ENCODE measurements at regions of chr1 and their contacts with region 1.

Region 1: GRCh38 chr1:152047730-152048402 is 11.1 kb upstream of the S100A11 start:
- DNase-seq: peak; percentile 99 to 100 (median 99)
- H3K4me3 ChIP-seq: peak overlapping the region; percentile 2 to 61 (median 26)
- H3K4me3 Mint-ChIP-seq: peak overlapping the region; percentile 74 to 91
- H3K27ac ChIP-seq: peak overlapping the region; percentile 98
- H3K27ac Mint-ChIP-seq: peak overlapping the region; percentile 100
- H3K4me1 ChIP-seq: peaks cover 69 to 78% of the 10 kb centered on the region in 2 donors
- H3K4me1 Mint-ChIP-seq: peaks cover 72% of the 10 kb centered on the region
- H3K27me3 ChIP-seq: peaks cover 0 to 2% of the 10 kb centered on the region in 2 donors
- H3K27me3 Mint-ChIP-seq: peaks cover under 1 to 3% (median 3%) of the 10 kb centered on the region in 3 donors
- CTCF ChIP-seq: peak; percentile 46

Region 2: GRCh38 chr1:151945725-151946364 is 102.0 kb before region 1 on chr1:
- intact Hi-C with region 1: loop called in 1 of 2 experiments (anchors 5 kb)
- DNase-seq: peak; percentile 99 to 100 (median 99)
- H3K4me3 ChIP-seq: peak overlapping the region in 1 of 3 experiments; percentile 46
- H3K4me3 Mint-ChIP-seq: peak overlapping the region; percentile 40 to 77
- H3K27ac ChIP-seq: peak overlapping the region; percentile 80 to 100
- H3K27ac Mint-ChIP-seq: peak overlapping the region; percentile 97 to 100 (median 99)
- H3K4me1 ChIP-seq: peaks cover 46 to 55% of the 10 kb centered on the region in 2 donors
- H3K4me1 Mint-ChIP-seq: peaks cover 54% of the 10 kb centered on the region
- H3K27me3 ChIP-seq: no peaks in the 10 kb centered on the region
- H3K27me3 Mint-ChIP-seq: peaks cover 0 to 8% (median 2%) of the 10 kb centered on the region in 3 donors
- CTCF ChIP-seq: no peak

Region 3: DNA sequence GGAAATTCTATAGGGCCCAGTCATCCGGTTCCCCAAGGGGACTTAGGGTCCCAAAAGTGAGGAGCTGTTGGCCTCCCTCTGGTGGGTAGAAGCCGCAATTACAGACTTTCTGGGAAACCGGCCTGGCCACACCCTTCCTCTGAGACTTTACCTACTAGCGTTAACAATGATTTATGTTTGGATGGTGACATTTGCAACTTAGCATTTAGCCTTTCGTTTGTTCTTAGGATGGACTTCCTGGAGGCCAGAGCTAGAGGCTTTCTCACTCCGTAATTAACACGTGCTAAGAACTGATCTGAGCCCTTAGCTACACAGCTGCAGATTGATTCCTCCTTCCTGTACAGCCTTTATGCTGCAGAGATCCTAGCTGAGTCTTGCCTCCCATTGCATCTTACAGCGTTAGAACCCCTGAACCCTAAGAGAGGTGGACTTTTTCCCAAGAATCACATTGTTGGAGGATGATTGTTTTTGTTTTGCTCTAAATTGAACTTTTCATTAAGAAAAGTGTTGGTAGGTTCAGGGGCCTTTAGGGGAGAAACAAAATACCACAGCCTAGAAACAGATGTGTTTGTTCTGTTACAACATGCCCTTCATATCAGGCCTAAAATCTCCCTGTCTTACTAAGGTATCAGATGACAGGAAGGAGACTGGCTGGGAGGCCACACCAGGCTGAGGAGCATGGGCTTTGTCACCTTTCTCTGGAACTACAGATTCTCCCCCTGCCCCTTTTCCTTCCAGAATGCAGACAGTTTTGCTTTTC is 13.0 kb before region 1 on chr1:
- intact Hi-C with region 1: loop called in 1 of 2 experiments (anchors 1 kb)
- DNase-seq: peak; percentile 68 to 80 (median 79)
- H3K4me3 ChIP-seq: peak overlapping the region; percentile 95 to 100 (median 100)
- H3K4me3 Mint-ChIP-seq: peak overlapping the region; percentile 95 to 98
- H3K27ac ChIP-seq: peak overlapping the region; percentile 98 to 99
- H3K27ac Mint-ChIP-seq: no peak overlapping the region
- H3K4me1 ChIP-seq: peaks cover 83 to 87% of the 10 kb centered on the region in 2 donors
- H3K4me1 Mint-ChIP-seq: peaks cover 44% of the 10 kb centered on the region
- H3K27me3 ChIP-seq: no peaks in the 10 kb centered on the region
- H3K27me3 Mint-ChIP-seq: peaks cover 0 to 4% (median 2%) of the 10 kb centered on the region in 3 donors
- CTCF ChIP-seq: peak; percentile 91

Region 4: GRCh38 chr1:152167835-152168519 is 120.1 kb after region 1 on chr1:
- intact Hi-C with region 1: loop called in 1 of 2 experiments (anchors 5 kb)
- DNase-seq: peak in 2 of 3 donors; percentile 27 to 32
- H3K4me3 ChIP-seq: no peak overlapping the region
- H3K4me3 Mint-ChIP-seq: no peak overlapping the region
- H3K27ac ChIP-seq: peak overlapping the region in 1 of 2 donors; percentile 5
- H3K27ac Mint-ChIP-seq: peak overlapping the region in 5 of 7 donors; percentile 4 to 55 (median 32)
- H3K4me1 ChIP-seq: peaks cover 100% of the 10 kb centered on the region in 2 donors
- H3K4me1 Mint-ChIP-seq: peaks cover 94% of the 10 kb centered on the region
- H3K27me3 ChIP-seq: no peaks in the 10 kb centered on the region
- H3K27me3 Mint-ChIP-seq: peaks cover 0 to 4% (median 2%) of the 10 kb centered on the region in 3 donors
- CTCF ChIP-seq: no peak

Region 5: GRCh38 chr1:152189657-152190442 is 142.0 kb after region 1 on chr1:
- intact Hi-C with region 1: loop called (anchors 1 to 2 kb)
- DNase-seq: peak; percentile 44 to 66 (median 59)
- H3K4me3 ChIP-seq: peak overlapping the region in 1 of 3 experiments; percentile 82
- H3K4me3 Mint-ChIP-seq: peak overlapping the region; percentile 78 to 87
- H3K27ac ChIP-seq: no peak overlapping the region
- H3K27ac Mint-ChIP-seq: peak overlapping the region in 2 of 7 donors; percentile 65 to 73
- H3K4me1 ChIP-seq: peaks cover 15 to 20% of the 10 kb centered on the region in 2 donors
- H3K4me1 Mint-ChIP-seq: peaks cover 27% of the 10 kb centered on the region
- H3K27me3 ChIP-seq: peaks cover 0 to 15% of the 10 kb centered on the region in 2 donors
- H3K27me3 Mint-ChIP-seq: peaks cover 14 to 32% (median 20%) of the 10 kb centered on the region in 3 donors
- CTCF ChIP-seq: peak; percentile 78

Region 6: DNA sequence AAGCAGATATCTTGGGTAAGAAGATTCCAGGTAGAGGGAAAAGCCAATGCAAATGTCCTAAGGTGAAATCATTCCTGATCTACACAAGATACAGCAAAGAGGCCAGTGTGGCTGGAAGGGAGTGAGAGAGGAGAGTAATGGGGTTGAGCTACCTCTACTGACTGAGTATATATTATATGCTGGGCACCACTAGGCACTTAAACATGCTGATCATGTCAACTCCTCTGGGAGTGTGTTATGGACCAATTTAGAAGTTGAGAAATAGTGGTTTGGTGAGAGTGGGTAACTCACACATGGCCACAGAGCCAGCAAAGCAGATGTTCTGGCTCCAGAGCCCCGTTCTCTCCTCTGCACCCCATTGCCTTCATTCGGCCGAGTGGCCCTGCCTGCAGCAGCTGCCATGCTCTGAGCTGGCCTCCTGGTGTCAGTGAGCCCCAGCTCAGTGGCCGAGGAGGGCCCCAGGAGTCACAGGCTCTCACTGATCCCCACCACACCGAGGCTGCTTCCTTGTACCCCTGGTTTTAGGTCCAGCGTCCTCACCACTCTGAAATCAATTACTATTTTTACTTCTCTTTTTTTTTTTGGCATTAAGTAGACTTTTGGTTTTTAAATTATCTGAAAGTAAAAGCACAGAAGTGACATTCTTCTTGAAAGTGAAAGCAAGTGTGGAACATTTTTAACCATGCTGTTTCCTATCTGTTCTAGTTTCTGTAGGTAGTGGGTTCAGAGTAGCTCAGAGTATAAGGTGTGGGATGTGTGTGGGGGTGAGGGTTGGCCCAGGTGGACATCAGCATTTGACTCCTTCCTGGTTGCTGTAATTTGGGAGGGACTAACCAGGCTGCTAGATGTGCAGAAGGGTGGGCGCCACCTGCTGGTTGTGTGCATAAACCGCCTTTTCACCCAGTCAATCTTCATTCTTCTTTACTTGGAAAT is 412.0 kb after region 1 on chr1:
- intact Hi-C with region 1: loop called in 1 of 2 experiments (anchors 10 kb)
- DNase-seq: peak; percentile 62 to 69 (median 67)
- H3K4me3 ChIP-seq: peak overlapping the region; percentile 22 to 73 (median 32)
- H3K4me3 Mint-ChIP-seq: peak overlapping the region; percentile 61 to 88
- H3K27ac ChIP-seq: peak overlapping the region; percentile 58 to 82
- H3K27ac Mint-ChIP-seq: peak overlapping the region; percentile 63 to 94 (median 90)
- H3K4me1 ChIP-seq: peaks cover 6 to 12% of the 10 kb centered on the region in 2 donors
- H3K4me1 Mint-ChIP-seq: peaks cover 23% of the 10 kb centered on the region
- H3K27me3 ChIP-seq: no peaks in the 10 kb centered on the region
- H3K27me3 Mint-ChIP-seq: peaks cover 0 to 10% (median 4%) of the 10 kb centered on the region in 3 donors
- CTCF ChIP-seq: peak; percentile 93

Region 7: GRCh38 chr1:153572569-153573015 is 1524.7 kb after region 1 on chr1:
- intact Hi-C with region 1: loop called in 1 of 2 experiments (anchors 5 kb)
- DNase-seq: peak; percentile 55 to 74 (median 67)
- H3K4me3 ChIP-seq: peak overlapping the region in 1 of 3 experiments; percentile 19
- H3K4me3 Mint-ChIP-seq: no peak overlapping the region
- H3K27ac ChIP-seq: peak overlapping the region; percentile 59 to 66
- H3K27ac Mint-ChIP-seq: peak overlapping the region; percentile 76 to 92 (median 87)
- H3K4me1 ChIP-seq: peaks cover 44 to 47% of the 10 kb centered on the region in 2 donors
- H3K4me1 Mint-ChIP-seq: peaks cover 49% of the 10 kb centered on the region
- H3K27me3 ChIP-seq: no peaks in the 10 kb centered on the region
- H3K27me3 Mint-ChIP-seq: peaks cover 0 to 10% (median 2%) of the 10 kb centered on the region in 3 donors
- CTCF ChIP-seq: peak; percentile 78

Measured in CD14-positive monocyte (primary cell).